Activated CD4-positive, alpha-beta T cell treated with anti-CD3 and anti-CD28 coated beads, Interleukin-2, amount 10 ng/mL, durations not matched to agents 24 days and 14 days (primary cell): ENCODE measurements at regions of chr1 and their contacts with region 1.

Region 1: DNA sequence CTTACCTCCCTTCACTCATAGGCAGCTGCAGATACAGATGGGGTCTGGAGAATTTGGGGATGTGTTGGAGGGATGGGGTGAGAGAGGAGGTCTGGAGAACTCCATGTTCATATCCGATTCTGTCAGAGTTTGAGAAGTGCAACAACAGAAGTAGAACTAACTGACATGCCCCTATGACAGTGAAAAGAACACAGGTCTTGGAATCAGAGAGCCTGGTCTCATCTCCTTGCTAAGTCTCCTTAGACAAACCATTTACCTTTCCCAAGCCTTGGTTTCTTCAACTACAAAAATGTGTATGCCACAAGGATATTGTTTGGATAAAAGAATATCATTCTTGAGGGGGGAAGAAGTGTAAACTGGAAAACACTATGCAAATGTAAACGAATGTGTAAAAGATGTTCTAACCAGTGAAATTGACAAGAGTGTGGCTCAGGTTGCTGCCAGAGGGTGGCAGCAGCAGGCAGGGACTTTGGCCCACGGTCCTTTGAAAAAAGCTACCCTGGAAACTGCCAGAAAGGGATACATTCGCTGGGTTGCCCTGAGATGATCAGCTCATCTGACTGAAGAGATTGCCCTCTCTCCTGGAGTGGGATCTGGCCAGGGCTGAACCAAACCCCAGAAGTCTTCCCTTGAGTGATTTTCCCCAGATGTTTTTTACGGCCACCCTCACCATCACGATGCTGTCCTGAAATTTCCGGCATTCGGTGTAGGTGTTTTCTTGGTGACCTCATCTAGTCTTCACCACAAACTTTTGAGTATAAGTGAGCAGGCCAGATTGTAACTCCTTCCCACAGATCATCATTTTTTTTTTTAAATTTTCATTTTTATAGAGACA is 17.0 kb upstream of the CD2 start:
- DNase-seq: peak; percentile 93
- H3K4me3 Mint-ChIP-seq: peak overlapping the region; percentile 76
- H3K27ac Mint-ChIP-seq: peak overlapping the region; percentile 100
- H3K4me1 Mint-ChIP-seq: peaks cover 67% of the 10 kb centered on the region
- H3K27me3 Mint-ChIP-seq: no peaks in the 10 kb centered on the region

Region 2: DNA sequence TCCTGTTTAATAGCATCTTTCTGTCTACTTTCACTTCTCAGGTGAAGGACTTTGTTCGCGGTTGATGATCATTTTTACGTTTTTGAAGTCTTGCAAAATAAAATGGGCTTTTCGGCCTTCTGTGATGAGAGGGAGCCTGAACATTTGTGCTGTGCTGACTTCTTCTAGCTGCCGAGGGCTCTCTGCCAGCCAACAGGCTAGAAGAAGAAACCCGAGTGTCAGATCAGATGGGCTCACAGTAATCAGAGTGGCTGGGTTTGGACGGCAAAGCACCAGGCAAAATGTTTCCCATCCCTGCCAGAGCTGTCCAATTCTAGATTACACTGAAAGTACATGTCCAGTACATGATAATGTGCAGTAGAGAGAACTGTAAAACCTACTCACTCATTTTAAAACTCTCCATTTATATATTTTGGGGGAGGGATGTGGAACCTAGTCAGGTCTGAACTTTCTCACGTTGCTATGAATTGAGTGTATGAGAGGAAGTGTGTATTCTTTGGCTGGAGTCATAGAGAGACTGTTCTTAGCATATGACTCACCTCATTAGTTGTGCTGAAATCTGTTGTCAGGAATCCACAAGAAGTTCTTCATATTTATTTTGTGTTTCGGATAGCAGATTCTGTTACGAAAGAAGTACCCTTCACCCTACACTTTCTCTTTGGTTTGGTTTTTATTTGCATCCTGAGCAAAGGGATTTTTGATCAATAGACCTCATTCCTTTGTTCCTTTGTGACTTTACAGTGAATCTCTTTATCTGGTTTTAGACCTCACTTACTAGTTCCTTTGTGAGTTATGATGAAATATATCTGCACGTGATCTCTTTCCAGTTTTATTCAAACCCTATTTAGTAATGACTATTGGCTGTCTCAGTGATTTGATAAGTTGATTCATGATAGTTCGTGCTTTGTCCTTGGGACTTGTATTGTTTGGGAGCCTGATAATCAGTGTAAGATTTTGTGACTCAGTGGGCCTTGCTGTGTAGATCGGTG is 359.4 kb before region 1 on chr1:
- intact Hi-C with region 1: loop called (anchors 1 kb)
- DNase-seq: peak; percentile 81
- H3K4me3 Mint-ChIP-seq: peak overlapping the region; percentile 88
- H3K27ac Mint-ChIP-seq: peak overlapping the region; percentile 83
- H3K4me1 Mint-ChIP-seq: peaks cover 70% of the 10 kb centered on the region
- H3K27me3 Mint-ChIP-seq: no peaks in the 10 kb centered on the region

Region 3: DNA sequence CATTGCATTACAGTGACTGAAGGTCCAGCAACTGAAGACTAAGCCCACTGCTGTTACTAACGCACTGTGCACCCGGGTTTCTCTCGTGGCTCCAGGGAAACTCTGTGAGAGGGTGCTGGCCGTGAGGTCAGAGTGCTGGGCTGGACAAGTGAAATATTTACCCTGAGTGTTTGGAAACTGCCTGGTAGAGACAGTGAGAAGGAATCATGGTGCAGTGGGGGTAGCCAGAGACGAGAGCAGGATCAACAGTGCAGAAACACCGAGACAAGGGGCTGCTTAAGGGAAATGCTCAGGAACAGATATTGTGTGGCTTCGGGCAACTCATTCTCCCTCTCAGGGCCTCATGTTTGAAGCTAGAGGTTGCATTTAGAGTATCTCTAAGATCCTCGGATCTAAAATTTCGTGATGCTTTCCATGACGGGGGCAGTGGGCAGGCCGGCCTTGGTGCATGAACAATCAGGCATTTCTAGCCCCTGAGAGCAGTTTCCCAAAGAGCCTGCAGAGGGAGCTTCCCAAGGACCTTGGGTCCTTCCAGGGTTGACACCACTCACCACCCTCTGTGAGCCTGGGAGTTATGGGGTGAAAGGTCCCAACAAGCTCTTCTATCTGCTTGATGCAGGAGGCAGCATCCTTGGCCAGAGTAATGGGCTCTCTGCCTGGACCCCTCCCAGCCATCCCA is 26.7 kb after region 1 on chr1:
- intact Hi-C with region 1: loop called (anchors 1 kb)
- DNase-seq: peak; percentile 86
- H3K4me3 Mint-ChIP-seq: peak overlapping the region; percentile 98
- H3K27ac Mint-ChIP-seq: peak overlapping the region; percentile 99
- H3K4me1 Mint-ChIP-seq: peaks cover 85% of the 10 kb centered on the region
- H3K27me3 Mint-ChIP-seq: no peaks in the 10 kb centered on the region

Region 4: DNA sequence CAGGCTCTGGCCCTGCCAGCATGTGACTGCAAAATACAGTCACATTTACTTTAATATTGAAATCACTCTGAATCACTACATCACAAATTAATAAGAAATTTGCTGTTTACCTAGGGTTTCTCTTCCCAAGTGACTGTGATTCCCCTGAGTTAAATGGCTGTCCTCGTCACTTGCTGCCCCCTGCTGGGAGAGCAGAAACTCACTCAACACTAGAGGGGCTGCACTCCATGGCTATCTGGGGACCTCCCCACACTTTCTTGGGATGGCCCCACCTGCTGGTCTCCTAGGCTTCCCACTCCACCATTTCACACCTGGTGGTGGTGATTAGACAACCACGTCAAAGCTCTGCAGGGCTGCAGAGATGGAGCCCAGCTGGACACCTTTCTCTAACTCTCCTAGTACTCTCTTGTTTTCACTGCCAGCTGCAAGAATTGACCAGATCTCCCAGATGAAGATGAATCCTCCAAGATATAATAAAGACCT is 80.4 kb after region 1 on chr1:
- intact Hi-C with region 1: loop called (anchors 1 kb)
- DNase-seq: peak; percentile 90
- H3K4me3 Mint-ChIP-seq: peak overlapping the region; percentile 62
- H3K27ac Mint-ChIP-seq: peak overlapping the region; percentile 89
- H3K4me1 Mint-ChIP-seq: peaks cover 48% of the 10 kb centered on the region
- H3K27me3 Mint-ChIP-seq: no peaks in the 10 kb centered on the region

Region 5: GRCh38 chr1:116881879-116882520 is 144.8 kb after region 1 on chr1:
- intact Hi-C with region 1: loop called (anchors 1 kb)
- DNase-seq: peak; percentile 82
- H3K4me3 Mint-ChIP-seq: no peak overlapping the region
- H3K27ac Mint-ChIP-seq: no peak overlapping the region
- H3K4me1 Mint-ChIP-seq: peaks cover 28% of the 10 kb centered on the region
- H3K27me3 Mint-ChIP-seq: no peaks in the 10 kb centered on the region

Region 6: DNA sequence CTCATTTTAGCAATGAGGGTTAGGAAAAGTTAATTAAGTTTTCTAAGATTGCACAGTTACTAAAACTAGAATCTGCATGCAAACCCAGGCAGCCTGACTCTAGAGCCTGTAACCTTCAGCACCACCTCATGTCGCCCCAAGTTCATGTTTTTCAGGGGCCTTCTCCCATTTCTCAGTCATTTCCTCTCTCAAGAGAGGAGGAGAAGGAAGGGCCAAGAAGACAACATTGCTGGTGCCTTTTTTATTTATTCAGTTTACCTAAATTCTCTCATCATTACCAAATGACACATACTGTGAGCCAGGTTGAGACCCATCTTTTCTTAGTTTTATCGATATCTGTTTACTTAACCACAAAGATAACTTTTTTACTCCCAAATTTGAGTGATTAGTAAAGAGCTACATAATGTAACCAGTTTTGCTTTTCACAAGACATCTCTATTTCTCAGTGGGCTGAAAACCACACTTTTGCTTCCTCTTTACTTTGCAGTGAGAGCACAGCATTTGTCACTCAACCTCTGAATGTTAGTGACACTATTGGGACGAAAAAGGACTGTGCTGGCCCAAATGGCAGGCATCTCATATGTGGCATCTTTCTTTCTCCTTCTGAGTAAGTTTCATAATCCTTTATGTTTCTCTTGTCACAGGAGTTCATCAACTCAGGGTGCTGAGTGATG is 264.2 kb after region 1 on chr1 and contains the start of gene CD101:
- intact Hi-C with region 1: loop called (anchors 1 kb)
- DNase-seq: peak; percentile 70
- H3K4me3 Mint-ChIP-seq: peak within 1 kb of the TSS; percentile 11
- H3K27ac Mint-ChIP-seq: peak within 1 kb of the TSS; percentile 66
- H3K4me1 Mint-ChIP-seq: peaks cover 29% of the 10 kb centered on the region
- H3K27me3 Mint-ChIP-seq: peaks cover under 1% of the 10 kb centered on the region
- total RNA-seq, gene CD101: 0.82 and 1.2 TPM in 2 replicates